Naive thymus-derived CD4-positive, alpha-beta T cell (primary cell): ENCODE measurements at regions of chr4 and their contacts with region 1.

Region 1: DNA sequence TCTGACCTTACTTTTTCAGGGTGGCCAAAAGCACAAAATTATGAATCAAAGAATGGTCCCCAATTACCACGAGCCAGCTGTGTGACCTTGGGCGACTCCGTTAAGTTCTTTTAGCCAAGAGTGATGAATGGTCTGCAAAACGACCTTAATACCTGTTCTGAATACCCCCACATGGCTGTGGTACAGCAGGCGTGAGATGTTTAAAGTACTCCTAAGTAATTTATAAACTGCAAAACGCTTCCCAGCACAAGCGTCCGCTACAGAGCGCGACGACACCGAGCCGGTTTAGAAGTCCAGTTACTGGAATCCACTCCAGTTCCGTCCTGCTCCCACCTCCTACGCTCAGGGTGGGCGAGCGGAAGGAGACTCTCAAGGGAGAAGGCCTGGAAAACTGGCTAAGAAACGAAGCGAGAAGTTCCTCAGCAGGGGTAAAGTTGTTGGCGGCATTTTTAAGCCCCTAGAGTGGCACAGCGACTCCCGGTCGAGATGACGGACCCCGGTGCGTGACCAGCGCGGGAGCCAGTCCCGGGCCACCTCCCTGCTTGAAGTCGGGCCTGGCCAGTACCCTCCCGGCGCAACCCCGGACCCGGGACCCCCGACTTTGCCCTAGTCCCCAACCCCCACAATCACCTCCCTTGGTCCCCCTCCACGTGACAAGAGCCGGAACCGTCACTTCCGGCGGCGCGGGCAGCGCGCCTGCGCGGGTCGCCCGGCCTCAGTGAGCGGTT is 683 bp upstream of the BMP2K start:
- DNase-seq: peak; percentile 80 to 93 (median 91)
- ATAC-seq: peak; percentile 81
- H3K4me3 ChIP-seq: peak overlapping the region; percentile 87
- H3K4me3 Mint-ChIP-seq: peak overlapping the region; percentile 88 to 97 (median 96)
- H3K27ac ChIP-seq: peak overlapping the region; percentile 78
- H3K27ac Mint-ChIP-seq: peak overlapping the region; percentile 84 to 98 (median 95)
- H3K4me1 ChIP-seq: peaks cover 4 to 14% of the 10 kb centered on the region in 2 donors
- H3K4me1 Mint-ChIP-seq: peaks cover 7 to 34% (median 13%) of the 10 kb centered on the region in 7 donors
- H3K27me3 ChIP-seq: no peaks in the 10 kb centered on the region
- H3K27me3 Mint-ChIP-seq: no peaks in the 10 kb centered on the region

Region 2: DNA sequence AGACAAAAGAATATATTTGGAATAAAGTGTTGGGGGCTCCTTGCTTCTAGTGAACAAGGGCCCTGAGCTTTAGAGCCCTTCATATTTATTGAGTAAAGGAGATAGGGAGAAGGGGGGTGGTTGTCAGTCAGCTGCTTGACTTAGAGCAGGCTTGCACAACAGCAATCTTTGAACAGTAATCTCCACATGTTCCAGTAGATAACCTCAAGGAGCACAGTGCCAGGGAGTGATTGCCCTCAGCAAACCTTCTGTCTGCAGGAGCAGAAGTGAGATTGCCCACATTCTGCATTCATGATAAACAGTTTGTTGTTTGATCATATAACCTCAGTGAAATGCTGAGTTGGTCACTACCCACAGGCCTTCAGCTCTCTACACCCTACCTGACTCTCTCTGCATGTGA is 1375.6 kb before region 1 on chr4:
- CTCF ChIA-PET with region 1: no interaction called
- POLR2A ChIA-PET with region 1: no interaction called
- intact Hi-C with region 1: no loop called
- DNase-seq: no peak
- ATAC-seq: no peak
- H3K4me3 ChIP-seq: no peak overlapping the region
- H3K4me3 Mint-ChIP-seq: no peak overlapping the region
- H3K27ac ChIP-seq: no peak overlapping the region
- H3K27ac Mint-ChIP-seq: no peak overlapping the region
- H3K4me1 ChIP-seq: no peaks in the 10 kb centered on the region
- H3K4me1 Mint-ChIP-seq: no peaks in the 10 kb centered on the region
- H3K27me3 ChIP-seq: no peaks in the 10 kb centered on the region
- H3K27me3 Mint-ChIP-seq: peaks cover 11 to 31% (median 27%) of the 10 kb centered on the region in 5 donors

Region 3: DNA sequence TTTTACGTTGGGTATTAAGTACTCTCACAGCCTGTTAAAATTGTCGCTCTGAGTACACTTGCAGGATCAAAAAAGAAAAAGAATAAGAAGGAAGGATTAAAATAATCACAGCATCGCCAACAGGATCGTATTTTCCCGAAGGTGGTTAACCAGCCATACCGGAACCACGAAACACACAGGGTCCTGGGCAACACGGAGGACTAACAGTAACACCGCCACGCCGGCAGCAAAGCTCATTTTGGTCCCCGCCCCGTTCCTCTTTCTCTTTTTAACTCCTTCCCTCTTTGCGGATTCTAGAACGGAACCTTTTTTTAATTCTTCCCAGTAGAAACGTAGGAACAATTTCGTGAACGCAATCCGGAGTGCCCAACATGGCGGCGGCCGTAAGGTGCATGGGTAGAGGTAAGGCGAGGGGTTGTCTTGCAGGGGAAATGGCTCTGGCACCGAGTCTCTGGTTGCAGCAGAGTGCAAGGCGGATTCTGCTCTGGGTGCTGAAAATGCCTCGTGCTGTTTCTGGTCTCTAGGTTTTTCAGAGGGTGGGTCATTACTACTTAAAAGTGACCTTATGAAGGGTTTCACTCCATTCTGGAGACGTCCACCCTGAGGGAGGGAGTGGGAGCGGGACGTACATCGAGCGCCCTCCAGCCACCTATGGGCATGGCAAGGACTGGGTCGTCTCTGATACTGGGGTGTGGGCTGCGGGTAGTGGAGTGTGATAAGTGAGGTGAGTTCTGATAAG is 912.8 kb before region 1 on chr4 and contains the start of gene MRPL1:
- CTCF ChIA-PET with region 1: no interaction called
- POLR2A ChIA-PET with region 1: no interaction called
- intact Hi-C with region 1: loop called in 1 of 2 experiments (anchors 1 kb)
- DNase-seq: peak; percentile 68 to 95 (median 92)
- ATAC-seq: peak; percentile 87
- H3K4me3 ChIP-seq: peak within 1 kb of the TSS; percentile 76
- H3K4me3 Mint-ChIP-seq: peak within 1 kb of the TSS; percentile 92 to 99 (median 96)
- H3K27ac ChIP-seq: peak within 1 kb of the TSS; percentile 99
- H3K27ac Mint-ChIP-seq: peak within 1 kb of the TSS; percentile 97 to 100 (median 99)
- H3K4me1 ChIP-seq: peaks cover 24 to 31% of the 10 kb centered on the region in 2 donors
- H3K4me1 Mint-ChIP-seq: peaks cover 33 to 88% (median 71%) of the 10 kb centered on the region in 7 donors
- H3K27me3 ChIP-seq: no peaks in the 10 kb centered on the region
- H3K27me3 Mint-ChIP-seq: peaks cover 0 to 4% (median 0%) of the 10 kb centered on the region in 5 donors
- total RNA-seq, gene MRPL1: 13.0 to 37.9 (median 17.8) TPM

Region 4: DNA sequence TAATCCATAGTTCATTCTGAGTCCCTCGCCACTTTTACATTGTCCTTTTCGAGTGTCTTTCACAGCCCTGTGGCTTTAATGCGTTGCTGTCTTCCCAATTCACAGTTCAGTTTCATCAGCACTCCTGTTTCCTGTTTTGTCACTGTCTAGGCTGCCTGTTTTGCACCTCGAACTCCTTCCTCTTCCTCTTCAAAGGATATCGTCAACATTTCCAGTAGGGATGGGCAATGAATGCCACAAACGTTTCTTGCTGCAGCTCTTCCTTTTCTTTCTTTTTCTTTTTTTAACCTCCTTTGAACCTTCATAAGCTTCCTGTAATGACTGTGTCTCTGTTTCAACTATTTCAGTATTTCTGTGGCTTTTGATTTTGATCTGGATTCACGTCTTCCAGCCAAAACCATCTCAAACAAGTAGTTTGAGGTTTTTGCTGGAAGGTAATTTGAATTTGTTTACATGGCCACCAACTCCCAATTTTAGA is 118.5 kb before region 1 on chr4:
- CTCF ChIA-PET with region 1: interaction called, 4 read pairs
- POLR2A ChIA-PET with region 1: interaction called, 3 read pairs
- intact Hi-C with region 1: loop called (anchors 2 kb)
- DNase-seq: peak in 8 of 9 donors; percentile 25 to 45 (median 37)
- ATAC-seq: peak; percentile 59
- H3K4me3 ChIP-seq: peak overlapping the region; percentile 14
- H3K4me3 Mint-ChIP-seq: peak overlapping the region; percentile 69 to 90 (median 76)
- H3K27ac ChIP-seq: peak overlapping the region; percentile 28
- H3K27ac Mint-ChIP-seq: peak overlapping the region; percentile 19 to 79 (median 72)
- H3K4me1 ChIP-seq: peaks cover 8 to 31% of the 10 kb centered on the region in 2 donors
- H3K4me1 Mint-ChIP-seq: peaks cover 35 to 49% (median 47%) of the 10 kb centered on the region in 7 donors
- H3K27me3 ChIP-seq: no peaks in the 10 kb centered on the region
- H3K27me3 Mint-ChIP-seq: no peaks in the 10 kb centered on the region

Region 5: GRCh38 chr4:78845472-78845871 is 70.0 kb after region 1 on chr4:
- CTCF ChIA-PET with region 1: no interaction called
- POLR2A ChIA-PET with region 1: no interaction called
- intact Hi-C with region 1: loop called in 1 of 2 experiments (anchors 5 kb)
- DNase-seq: no peak
- ATAC-seq: no peak
- H3K4me3 ChIP-seq: no peak overlapping the region
- H3K4me3 Mint-ChIP-seq: no peak overlapping the region
- H3K27ac ChIP-seq: no peak overlapping the region
- H3K27ac Mint-ChIP-seq: no peak overlapping the region
- H3K4me1 ChIP-seq: no peaks in the 10 kb centered on the region
- H3K4me1 Mint-ChIP-seq: peaks cover 0 to 7% (median 0%) of the 10 kb centered on the region in 7 donors
- H3K27me3 ChIP-seq: no peaks in the 10 kb centered on the region
- H3K27me3 Mint-ChIP-seq: no peaks in the 10 kb centered on the region

Region 6: GRCh38 chr4:80072744-80073472 is 1297.4 kb after region 1 on chr4 and contains the start of gene ANTXR2:
- CTCF ChIA-PET with region 1: no interaction called
- POLR2A ChIA-PET with region 1: no interaction called
- intact Hi-C with region 1: loop called (anchors 1 to 10 kb)
- DNase-seq: peak; percentile 49 to 75 (median 56)
- ATAC-seq: peak; percentile 85
- H3K4me3 ChIP-seq: peak within 1 kb of the TSS; percentile 76
- H3K4me3 Mint-ChIP-seq: peak within 1 kb of the TSS; percentile 82 to 99 (median 96)
- H3K27ac ChIP-seq: peak within 1 kb of the TSS; percentile 86
- H3K27ac Mint-ChIP-seq: peak within 1 kb of the TSS; percentile 88 to 98 (median 96)
- H3K4me1 ChIP-seq: peaks cover 23 to 29% of the 10 kb centered on the region in 2 donors
- H3K4me1 Mint-ChIP-seq: peaks cover 25 to 76% (median 62%) of the 10 kb centered on the region in 7 donors
- H3K27me3 ChIP-seq: no peaks in the 10 kb centered on the region
- H3K27me3 Mint-ChIP-seq: peaks cover 0 to 3% (median 0%) of the 10 kb centered on the region in 5 donors
- total RNA-seq, gene ANTXR2: 20.3 to 69.8 (median 50.0) TPM